ENCODE measurements at regions of chr6 and their contacts with region 1.

Region 1: GRCh38 chr6:85537055-85537494 is 56.6 kb downstream of the SNX14 start:
- DNase-seq: peak; percentile 15
- CTCF ChIP-seq: peak; percentile 35

Region 2: GRCh38 chr6:85551264-85551663 is 14.2 kb after region 1 on chr6:
- CTCF ChIA-PET with region 1: interaction called, 13 read pairs
- POLR2A ChIA-PET with region 1: no interaction called
- DNase-seq: no peak
- CTCF ChIP-seq: no peak

Region 3: DNA sequence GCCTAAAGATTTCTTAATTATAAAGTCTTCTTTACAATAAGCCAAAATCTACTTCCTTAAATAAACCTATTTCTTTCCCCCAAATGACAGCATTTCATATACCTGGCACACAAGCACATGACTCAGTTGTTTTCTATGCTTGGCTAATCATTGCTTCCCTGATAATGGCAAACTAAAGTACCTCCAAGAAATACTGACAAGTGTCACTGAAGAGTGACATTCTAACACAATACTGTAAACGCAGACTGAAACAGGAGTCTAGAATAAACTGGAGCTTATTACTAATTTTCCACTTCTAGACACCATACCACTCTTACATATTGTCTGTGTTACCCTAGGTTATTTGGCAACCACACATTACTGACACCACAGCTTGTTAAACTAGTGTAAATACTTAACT is 91.3 kb after region 1 on chr6:
- CTCF ChIA-PET with region 1: no interaction called
- POLR2A ChIA-PET with region 1: no interaction called
- DNase-seq: no peak
- CTCF ChIP-seq: no peak